ENCODE measurements at regions of chr7 and their contacts with region 1.

Region 1: GRCh38 chr7:150448789-150449147 is 1.7 kb upstream of the GIMAP8 start:
- DNase-seq: peak; percentile 75 to 94 (median 89)
- ATAC-seq: peak; percentile 59
- H3K4me3 ChIP-seq: peak overlapping the region; percentile 9 to 32
- H3K4me3 Mint-ChIP-seq: peak overlapping the region; percentile 99
- H3K27ac ChIP-seq: peak overlapping the region; percentile 67 to 82
- H3K27ac Mint-ChIP-seq: peak overlapping the region; percentile 95
- H3K4me1 ChIP-seq: peaks cover 31% of the 10 kb centered on the region
- H3K4me1 Mint-ChIP-seq: peaks cover 58% of the 10 kb centered on the region
- H3K27me3 ChIP-seq: no peaks in the 10 kb centered on the region
- H3K27me3 Mint-ChIP-seq: no peaks in the 10 kb centered on the region
- CTCF ChIP-seq: peak; percentile 90

Region 2: GRCh38 chr7:150481186-150481920 is 32.6 kb after region 1 on chr7:
- CTCF ChIA-PET with region 1: interaction called, 67 read pairs
- POLR2A ChIA-PET with region 1: interaction called, 103 read pairs
- intact Hi-C with region 1: loop called (anchors 2 kb)
- DNase-seq: peak; percentile 27 to 84 (median 65)
- ATAC-seq: peak; percentile 63
- H3K4me3 ChIP-seq: peak overlapping the region; percentile 1 to 14
- H3K4me3 Mint-ChIP-seq: peak overlapping the region; percentile 81
- H3K27ac ChIP-seq: peak overlapping the region; percentile 55 to 91
- H3K27ac Mint-ChIP-seq: peak overlapping the region; percentile 100
- H3K4me1 ChIP-seq: peaks cover 89% of the 10 kb centered on the region
- H3K4me1 Mint-ChIP-seq: peaks cover 91% of the 10 kb centered on the region
- H3K27me3 ChIP-seq: no peaks in the 10 kb centered on the region
- H3K27me3 Mint-ChIP-seq: no peaks in the 10 kb centered on the region
- CTCF ChIP-seq: no peak

Region 3: GRCh38 chr7:150514748-150515222 is 66.0 kb after region 1 on chr7 and contains the start of gene GIMAP7:
- CTCF ChIA-PET with region 1: interaction called, 192 read pairs
- POLR2A ChIA-PET with region 1: interaction called, 483 read pairs
- intact Hi-C with region 1: loop called (anchors 1 to 2 kb)
- DNase-seq: peak; percentile 36 to 87 (median 73)
- ATAC-seq: peak; percentile 82
- H3K4me3 ChIP-seq: peak within 1 kb of the TSS; percentile 63 to 76
- H3K4me3 Mint-ChIP-seq: peak within 1 kb of the TSS; percentile 100
- H3K27ac ChIP-seq: peak within 1 kb of the TSS; percentile 69 to 75
- H3K27ac Mint-ChIP-seq: peak within 1 kb of the TSS; percentile 99
- H3K4me1 ChIP-seq: peaks cover 45% of the 10 kb centered on the region
- H3K4me1 Mint-ChIP-seq: peaks cover 48% of the 10 kb centered on the region
- H3K27me3 ChIP-seq: no peaks in the 10 kb centered on the region
- H3K27me3 Mint-ChIP-seq: no peaks in the 10 kb centered on the region
- CTCF ChIP-seq: no peak
- total RNA-seq, gene GIMAP7: 21.2 to 29.7 TPM

Region 4: GRCh38 chr7:150620617-150621371 is 172.0 kb after region 1 on chr7:
- CTCF ChIA-PET with region 1: interaction called, 6 read pairs
- POLR2A ChIA-PET with region 1: interaction called, 10 read pairs
- intact Hi-C with region 1: no loop called
- DNase-seq: no peak
- ATAC-seq: no peak
- H3K4me3 ChIP-seq: no peak overlapping the region
- H3K4me3 Mint-ChIP-seq: no peak overlapping the region
- H3K27ac ChIP-seq: peak overlapping the region in 1 of 2 experiments; percentile 21
- H3K27ac Mint-ChIP-seq: peak overlapping the region; percentile 87
- H3K4me1 ChIP-seq: peaks cover 32% of the 10 kb centered on the region
- H3K4me1 Mint-ChIP-seq: peaks cover 58% of the 10 kb centered on the region
- H3K27me3 ChIP-seq: no peaks in the 10 kb centered on the region
- H3K27me3 Mint-ChIP-seq: no peaks in the 10 kb centered on the region
- CTCF ChIP-seq: no peak

Region 5: DNA sequence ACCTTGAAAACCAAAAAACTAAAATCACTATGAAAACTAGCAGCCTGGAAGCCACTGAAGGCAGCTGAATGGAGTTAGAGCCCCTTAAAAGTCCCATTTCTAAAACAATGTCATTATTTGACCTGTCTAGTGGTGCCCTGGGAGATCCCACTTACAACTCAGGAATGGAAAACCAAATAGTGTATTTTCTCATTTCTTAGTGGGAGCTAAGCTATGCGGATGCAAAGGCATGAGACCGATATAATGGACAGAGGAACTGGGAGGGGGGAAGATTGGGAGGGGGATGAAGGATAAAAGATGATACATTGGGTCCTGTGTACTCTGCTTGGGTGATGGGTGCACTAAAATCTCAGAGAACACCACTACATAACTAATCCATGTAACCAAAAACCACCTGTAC is 226.9 kb after region 1 on chr7:
- CTCF ChIA-PET with region 1: interaction called, 11 read pairs
- POLR2A ChIA-PET with region 1: no interaction called
- intact Hi-C with region 1: no loop called
- DNase-seq: no peak
- ATAC-seq: no peak
- H3K4me3 ChIP-seq: peak overlapping the region in 1 of 2 experiments; percentile 24
- H3K4me3 Mint-ChIP-seq: peak overlapping the region; percentile 36
- H3K27ac ChIP-seq: peak overlapping the region; percentile 12 to 70
- H3K27ac Mint-ChIP-seq: peak overlapping the region; percentile 83
- H3K4me1 ChIP-seq: peaks cover 69% of the 10 kb centered on the region
- H3K4me1 Mint-ChIP-seq: peaks cover 81% of the 10 kb centered on the region
- H3K27me3 ChIP-seq: no peaks in the 10 kb centered on the region
- H3K27me3 Mint-ChIP-seq: no peaks in the 10 kb centered on the region
- CTCF ChIP-seq: no peak

Region 6: GRCh38 chr7:150737265-150738055 is 288.7 kb after region 1 on chr7 and contains the start of gene GIMAP5:
- CTCF ChIA-PET with region 1: interaction called, 14 read pairs
- POLR2A ChIA-PET with region 1: interaction called, 89 read pairs
- intact Hi-C with region 1: loop called (anchors 1 to 5 kb)
- DNase-seq: peak in 7 of 9 experiments; percentile 57 to 82 (median 61)
- ATAC-seq: peak; percentile 71
- H3K4me3 ChIP-seq: peak within 1 kb of the TSS; percentile 76 to 83
- H3K4me3 Mint-ChIP-seq: peak within 1 kb of the TSS; percentile 95
- H3K27ac ChIP-seq: peak within 1 kb of the TSS; percentile 66 to 81
- H3K27ac Mint-ChIP-seq: peak within 1 kb of the TSS; percentile 97
- H3K4me1 ChIP-seq: peaks cover 66% of the 10 kb centered on the region
- H3K4me1 Mint-ChIP-seq: peaks cover 74% of the 10 kb centered on the region
- H3K27me3 ChIP-seq: no peaks in the 10 kb centered on the region
- H3K27me3 Mint-ChIP-seq: no peaks in the 10 kb centered on the region
- CTCF ChIP-seq: no peak
- total RNA-seq, gene GIMAP5: 23.5 to 24.1 TPM